ENCODE measurements at regions of chr2 and their contacts with region 1.

Region 1: DNA sequence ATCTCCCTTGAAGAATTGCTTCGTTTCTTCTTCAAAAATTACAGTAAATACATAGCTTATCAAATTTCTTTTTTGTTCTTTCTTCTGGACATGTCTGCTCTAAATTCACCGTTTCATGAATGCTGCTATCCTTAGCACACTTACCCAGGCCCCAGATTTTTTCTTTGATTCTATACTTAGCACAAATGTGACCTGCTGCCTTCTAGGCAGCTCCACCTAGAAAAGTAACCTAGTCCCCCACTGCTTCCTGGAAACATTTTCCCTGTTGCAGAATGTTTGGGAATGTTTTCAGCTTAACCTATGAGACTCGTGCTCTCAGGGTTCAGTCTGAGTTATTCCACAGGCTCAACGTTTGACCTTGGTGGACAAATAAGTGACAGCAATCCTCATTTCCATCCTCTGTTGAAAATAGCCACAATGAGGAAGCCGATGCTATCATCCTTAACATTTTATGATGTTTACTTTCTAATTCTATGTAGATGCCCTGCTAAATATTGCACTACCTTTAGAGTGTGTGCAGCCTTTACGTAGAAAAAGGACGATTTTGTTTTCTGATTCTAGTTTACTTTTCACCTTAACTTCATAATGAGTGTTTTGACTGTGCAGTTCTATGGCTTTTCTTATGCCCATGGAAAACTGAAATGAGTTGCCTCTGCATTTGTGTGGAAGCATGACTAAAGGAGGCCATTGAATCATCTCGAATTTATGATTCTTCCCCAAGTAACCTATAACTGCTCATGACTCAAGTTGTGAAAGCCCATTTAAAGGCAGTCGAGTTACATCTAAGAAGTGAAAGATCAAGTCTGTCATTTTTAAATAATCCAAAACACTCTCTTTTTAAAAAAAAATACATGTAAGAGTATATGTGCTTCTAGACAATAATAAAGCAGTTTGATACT is 47.7 kb downstream of the TMEM182 start:
- DNase-seq: no peak
- H3K4me3 ChIP-seq: no peak overlapping the region
- H3K27ac ChIP-seq: no peak overlapping the region
- H3K4me1 ChIP-seq: no peaks in the 10 kb centered on the region
- H3K27me3 ChIP-seq: no peaks in the 10 kb centered on the region
- CTCF ChIP-seq: no peak
- POLR2A ChIP-seq: no peak

Region 2: DNA sequence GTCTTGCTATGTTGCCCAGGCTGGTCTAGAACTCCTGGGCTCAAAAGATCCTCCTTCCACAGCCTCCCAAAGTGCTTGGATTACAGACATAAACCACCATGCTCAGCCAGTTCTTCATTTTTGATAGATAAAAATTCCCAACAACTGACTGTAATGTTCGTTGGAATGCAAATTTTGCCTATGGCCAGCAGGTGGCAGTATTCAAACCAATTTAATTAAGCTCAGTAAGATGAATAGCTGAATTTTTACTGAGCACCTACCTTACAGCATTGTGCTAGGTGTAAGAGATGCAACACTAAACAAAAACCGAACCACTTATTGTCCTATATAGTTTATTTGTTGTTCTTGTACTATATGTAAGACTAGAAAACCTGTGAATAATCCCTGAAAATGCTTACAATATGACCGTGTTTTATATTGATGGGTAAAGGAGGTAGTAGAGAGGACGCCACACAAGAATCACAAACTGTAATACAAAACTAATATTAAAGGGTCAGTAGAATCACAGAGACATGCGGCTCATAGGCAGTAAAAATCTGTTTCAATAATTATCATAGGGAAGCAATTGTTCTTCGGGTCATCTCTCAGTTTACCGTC is 55.9 kb before region 1 on chr2:
- intact Hi-C with region 1: loop called (anchors 10 kb)
- DNase-seq: no peak
- H3K4me3 ChIP-seq: no peak overlapping the region
- H3K27ac ChIP-seq: no peak overlapping the region
- H3K4me1 ChIP-seq: no peaks in the 10 kb centered on the region
- H3K27me3 ChIP-seq: no peaks in the 10 kb centered on the region
- CTCF ChIP-seq: peak; percentile 52 to 80 (median 70)
- POLR2A ChIP-seq: no peak

Region 3: GRCh38 chr2:102771114-102771513 is 38.4 kb before region 1 on chr2:
- intact Hi-C with region 1: no loop called
- DNase-seq: no peak
- H3K4me3 ChIP-seq: no peak overlapping the region
- H3K27ac ChIP-seq: no peak overlapping the region
- H3K4me1 ChIP-seq: no peaks in the 10 kb centered on the region
- H3K27me3 ChIP-seq: no peaks in the 10 kb centered on the region
- CTCF ChIP-seq: no peak
- POLR2A ChIP-seq: no peak

Region 4: GRCh38 chr2:103208916-103209315 is 399.4 kb after region 1 on chr2:
- intact Hi-C with region 1: no loop called
- DNase-seq: no peak
- H3K4me3 ChIP-seq: no peak overlapping the region
- H3K27ac ChIP-seq: no peak overlapping the region
- H3K4me1 ChIP-seq: no peaks in the 10 kb centered on the region
- H3K27me3 ChIP-seq: no peaks in the 10 kb centered on the region
- CTCF ChIP-seq: no peak
- POLR2A ChIP-seq: no peak